Dorsolateral prefrontal cortex (tissue), 120 donors: ENCODE measurements at regions of chr12 and their contacts with region 1.

Region 1: GRCh38 chr12:124856234-124857178 is 7.2 kb downstream of the SCARB1 start:
- DNase-seq: no peak
- H3K4me3 ChIP-seq: peak overlapping the region in 6 of 59 donors; percentile 1 to 25 (median 8)
- H3K27ac ChIP-seq: peak overlapping the region in 51 of 59 donors; percentile 13 to 85 (median 64)
- H3K27me3 ChIP-seq: no peaks in the 10 kb centered on the region
- CTCF ChIP-seq: peak in 31 of 56 donors; percentile 8 to 50 (median 27)

Region 2: DNA sequence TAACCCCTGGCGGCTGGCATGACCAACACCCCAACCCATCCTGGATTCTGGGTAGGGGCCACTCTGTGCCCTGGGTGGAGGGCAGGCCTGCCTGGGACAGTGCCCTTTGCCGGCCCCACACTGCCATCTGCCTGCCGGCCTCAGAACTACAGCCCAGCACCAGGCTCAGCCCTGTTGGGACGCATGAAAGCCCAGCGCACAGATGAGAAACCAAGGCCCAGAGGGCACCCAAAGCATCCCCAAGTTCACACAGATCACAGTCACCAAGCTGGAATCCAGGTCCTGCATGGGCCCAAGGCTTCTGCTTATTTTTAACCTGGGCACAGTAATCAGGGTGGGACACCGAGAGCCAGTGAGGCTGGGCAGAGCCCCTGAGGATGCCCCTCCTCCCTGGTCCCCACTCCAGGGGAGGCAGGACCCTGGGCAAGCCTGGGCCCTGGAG is 535.4 kb before region 1 on chr12:
- intact Hi-C with region 1: no loop called
- DNase-seq: peak; percentile 64 to 86 (median 74)
- H3K4me3 ChIP-seq: no peak overlapping the region
- H3K27ac ChIP-seq: peak overlapping the region in 9 of 59 donors; percentile 4 to 66 (median 29)
- H3K27me3 ChIP-seq: no peaks in the 10 kb centered on the region
- CTCF ChIP-seq: peak; percentile 75 to 99 (median 98)

Region 3: GRCh38 chr12:124774462-124775167 is 81.9 kb before region 1 on chr12:
- intact Hi-C with region 1: loop called in 1 of 2 experiments (anchors 5 kb)
- DNase-seq: peak in 8 of 10 donors; percentile 62 to 83 (median 72)
- H3K4me3 ChIP-seq: peak overlapping the region in 58 of 59 donors; percentile 4 to 65 (median 42)
- H3K27ac ChIP-seq: peak overlapping the region in 55 of 59 donors; percentile 1 to 81 (median 53)
- H3K27me3 ChIP-seq: no peaks in the 10 kb centered on the region
- CTCF ChIP-seq: peak in 31 of 56 donors; percentile 10 to 53 (median 25)

Region 4: GRCh38 chr12:124979568-124979967 is 123.1 kb after region 1 on chr12:
- intact Hi-C with region 1: no loop called
- DNase-seq: peak in 2 of 10 donors; percentile 33 to 55
- H3K4me3 ChIP-seq: no peak overlapping the region
- H3K27ac ChIP-seq: peak overlapping the region in 4 of 59 donors; percentile 13 to 23 (median 21)
- H3K27me3 ChIP-seq: no peaks in the 10 kb centered on the region
- CTCF ChIP-seq: peak in 33 of 56 donors; percentile 10 to 67 (median 37)